ENCODE measurements at regions of chr21 and their contacts with region 1.

Region 1: DNA sequence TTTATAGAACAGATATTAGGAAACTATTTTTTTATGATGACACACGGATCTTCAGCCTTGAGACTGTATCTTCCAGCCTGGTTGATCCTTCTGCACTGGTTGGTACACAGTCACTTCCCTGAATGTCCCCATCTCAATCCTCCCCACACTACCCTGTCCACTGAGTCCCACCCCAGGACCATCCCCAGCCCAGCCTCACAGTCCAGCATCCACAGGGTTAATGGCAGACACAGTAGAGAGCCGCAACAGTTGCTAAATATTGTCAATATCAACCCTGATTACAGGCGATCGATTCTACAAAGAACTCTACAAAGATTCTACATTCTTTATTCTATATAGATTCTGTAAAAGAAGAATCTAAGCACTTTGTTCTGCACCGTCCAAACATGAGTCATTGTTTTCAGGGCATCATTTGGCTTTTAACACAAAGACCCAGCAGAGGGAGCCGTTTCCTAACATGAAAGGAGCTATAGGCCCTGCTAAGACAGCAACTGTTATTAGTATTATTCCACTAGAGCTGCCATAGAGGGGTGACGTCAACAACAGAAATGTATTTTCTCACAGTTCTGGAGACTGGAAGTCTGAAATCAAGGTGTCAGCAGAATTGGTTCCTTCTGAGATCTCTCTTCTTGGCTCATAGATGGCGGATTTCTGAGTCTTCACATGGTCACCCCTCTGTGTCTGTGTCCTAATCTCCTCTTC is 30.1 kb upstream of the IFNAR2 start:
- DNase-seq: peak; percentile 86 to 96 (median 89)
- H3K4me3 ChIP-seq: no peak overlapping the region
- H3K27ac ChIP-seq: peak overlapping the region in 4 of 5 donors; percentile 20 to 75 (median 62)
- H3K4me1 ChIP-seq: peaks cover 12 to 24% of the 10 kb centered on the region in 2 donors
- H3K27me3 ChIP-seq: no peaks in the 10 kb centered on the region
- CTCF ChIP-seq: peak; percentile 59 to 95 (median 86)
- POLR2A ChIP-seq: no peak

Region 2: DNA sequence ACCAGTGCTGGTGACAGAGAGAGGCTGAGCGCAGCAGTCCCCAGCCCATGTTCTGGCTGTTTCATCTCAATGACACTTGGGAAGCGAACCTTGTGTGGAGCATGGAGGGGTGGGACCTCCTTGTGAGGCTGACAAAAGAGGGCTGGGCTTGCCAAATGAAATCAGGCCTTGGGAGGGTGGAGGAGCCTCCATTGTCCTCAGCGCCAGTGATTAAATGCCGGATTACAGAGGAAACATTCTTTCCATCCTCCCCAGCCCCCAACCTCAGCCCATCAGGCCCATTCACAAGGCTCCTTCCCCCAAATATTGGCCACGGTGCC is 364.8 kb before region 1 on chr21:
- intact Hi-C with region 1: loop called in 1 of 2 experiments (anchors 10 kb)
- DNase-seq: no peak
- H3K4me3 ChIP-seq: no peak overlapping the region
- H3K27ac ChIP-seq: no peak overlapping the region
- H3K4me1 ChIP-seq: no peaks in the 10 kb centered on the region
- H3K27me3 ChIP-seq: no peaks in the 10 kb centered on the region
- CTCF ChIP-seq: no peak
- POLR2A ChIP-seq: no peak

Region 3: DNA sequence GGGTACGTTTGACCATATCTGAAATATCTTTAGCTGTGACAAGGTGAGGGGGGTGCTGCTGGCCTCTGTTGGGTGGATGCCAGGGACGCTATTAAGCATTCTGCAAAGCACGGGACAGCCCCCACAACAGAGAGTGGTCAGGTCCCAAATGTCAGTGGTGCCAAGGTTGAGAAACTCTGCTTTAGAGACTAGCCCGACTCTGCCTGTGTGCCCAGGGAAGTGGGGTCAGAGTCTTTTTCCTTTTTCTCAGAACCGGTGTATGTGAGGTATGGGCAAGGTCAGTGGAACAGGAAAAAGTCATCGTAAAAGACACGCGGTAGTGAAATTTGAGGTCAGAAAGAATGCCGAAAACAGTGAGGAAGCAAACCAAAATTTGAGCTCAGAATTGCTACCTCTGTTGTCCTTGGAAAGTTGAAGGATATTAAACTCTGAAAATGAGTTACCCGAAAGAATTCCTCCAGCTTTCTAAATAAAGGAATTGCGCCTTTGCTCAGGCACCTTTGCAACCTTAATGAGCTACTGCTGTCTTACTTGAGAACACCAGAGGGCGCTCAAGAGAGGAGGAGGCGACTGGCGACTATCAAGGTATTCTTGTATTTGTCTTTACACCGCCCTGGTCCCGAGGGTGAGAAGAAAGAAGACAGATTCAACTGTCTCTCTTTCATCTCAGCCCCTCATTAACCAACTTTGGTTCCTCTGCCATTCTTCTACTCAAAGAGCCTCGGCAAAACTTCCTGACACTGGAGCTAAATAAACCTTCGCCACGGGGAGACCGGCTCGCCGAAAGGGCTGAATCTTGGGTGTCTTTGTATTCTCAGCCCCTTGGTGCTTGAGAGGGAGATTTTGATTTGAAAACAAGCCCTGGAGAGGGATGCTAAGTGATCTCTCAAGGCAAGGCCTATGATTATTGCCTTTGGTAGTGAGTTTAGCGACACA is 259.3 kb before region 1 on chr21:
- intact Hi-C with region 1: loop called in 1 of 2 experiments (anchors 5 kb)
- DNase-seq: peak; percentile 24 to 63 (median 42)
- H3K4me3 ChIP-seq: no peak overlapping the region
- H3K27ac ChIP-seq: no peak overlapping the region
- H3K4me1 ChIP-seq: no peaks in the 10 kb centered on the region
- H3K27me3 ChIP-seq: no peaks in the 10 kb centered on the region
- CTCF ChIP-seq: peak; percentile 49 to 85 (median 65)
- POLR2A ChIP-seq: no peak

Region 4: DNA sequence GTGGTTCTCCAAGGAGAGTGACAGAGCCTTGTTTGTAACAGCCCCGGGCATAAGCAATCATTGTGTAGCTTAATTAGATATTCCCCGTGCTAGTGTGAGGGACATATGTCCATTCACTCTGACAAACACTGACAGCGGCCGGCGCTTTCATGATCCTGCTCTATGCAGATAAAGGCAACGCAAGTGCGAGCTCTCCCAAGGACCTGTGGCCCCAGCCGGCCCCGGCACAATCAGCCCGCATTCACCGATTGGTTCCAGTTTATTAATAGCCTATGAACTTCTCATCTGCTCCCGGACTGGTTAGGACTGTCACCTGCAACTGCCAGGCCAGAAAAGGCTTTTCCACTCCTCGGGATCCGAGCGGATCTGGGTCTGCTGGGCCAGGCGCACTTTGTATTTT is 147.7 kb before region 1 on chr21:
- intact Hi-C with region 1: no loop called
- DNase-seq: no peak
- H3K4me3 ChIP-seq: no peak overlapping the region
- H3K27ac ChIP-seq: no peak overlapping the region
- H3K4me1 ChIP-seq: no peaks in the 10 kb centered on the region
- H3K27me3 ChIP-seq: peaks cover 4% of the 10 kb centered on the region
- CTCF ChIP-seq: no peak
- POLR2A ChIP-seq: no peak

Region 5: GRCh38 chr21:33132054-33132453 is 67.6 kb before region 1 on chr21:
- intact Hi-C with region 1: no loop called
- DNase-seq: no peak
- H3K4me3 ChIP-seq: no peak overlapping the region
- H3K27ac ChIP-seq: no peak overlapping the region
- H3K4me1 ChIP-seq: no peaks in the 10 kb centered on the region
- H3K27me3 ChIP-seq: peaks cover 17% of the 10 kb centered on the region
- CTCF ChIP-seq: no peak
- POLR2A ChIP-seq: no peak

Region 6: DNA sequence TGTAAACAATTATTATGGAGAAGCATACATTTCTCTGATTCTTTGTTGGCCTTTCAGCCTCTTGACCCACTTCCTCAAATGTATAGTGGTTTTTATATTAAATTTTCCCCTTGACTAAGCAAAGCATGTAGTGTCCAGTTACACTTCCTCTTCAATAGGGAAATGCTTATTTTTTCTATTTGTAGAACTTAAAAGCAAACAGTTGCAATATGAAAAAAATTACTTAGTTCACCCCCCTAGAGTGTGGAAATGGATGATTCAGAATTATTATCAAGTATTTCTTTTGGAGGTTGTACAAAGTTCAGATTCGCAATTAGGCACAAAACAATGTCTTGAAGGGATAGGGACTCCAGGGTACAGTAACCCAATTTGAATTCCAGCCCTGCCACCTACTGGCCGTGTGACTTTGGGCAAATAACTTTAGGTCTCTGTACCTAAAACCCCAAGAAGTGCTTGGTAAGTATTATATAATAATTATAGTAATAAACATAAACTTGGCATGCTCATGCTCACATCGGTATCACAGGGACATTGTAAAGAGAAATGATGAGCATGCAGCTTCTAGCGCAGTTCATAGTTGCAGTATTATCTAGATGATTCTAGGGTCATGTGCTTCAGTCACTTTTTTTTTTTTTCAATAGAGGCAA is 174.9 kb after region 1 on chr21:
- intact Hi-C with region 1: loop called (anchors 5 to 10 kb)
- DNase-seq: peak; percentile 57 to 79 (median 62)
- H3K4me3 ChIP-seq: no peak overlapping the region
- H3K27ac ChIP-seq: peak overlapping the region in 3 of 5 donors; percentile 38 to 88 (median 42)
- H3K4me1 ChIP-seq: peaks cover 0 to 6% of the 10 kb centered on the region in 2 donors
- H3K27me3 ChIP-seq: no peaks in the 10 kb centered on the region
- CTCF ChIP-seq: peak; percentile 49 to 66 (median 60)
- POLR2A ChIP-seq: no peak

Region 7: DNA sequence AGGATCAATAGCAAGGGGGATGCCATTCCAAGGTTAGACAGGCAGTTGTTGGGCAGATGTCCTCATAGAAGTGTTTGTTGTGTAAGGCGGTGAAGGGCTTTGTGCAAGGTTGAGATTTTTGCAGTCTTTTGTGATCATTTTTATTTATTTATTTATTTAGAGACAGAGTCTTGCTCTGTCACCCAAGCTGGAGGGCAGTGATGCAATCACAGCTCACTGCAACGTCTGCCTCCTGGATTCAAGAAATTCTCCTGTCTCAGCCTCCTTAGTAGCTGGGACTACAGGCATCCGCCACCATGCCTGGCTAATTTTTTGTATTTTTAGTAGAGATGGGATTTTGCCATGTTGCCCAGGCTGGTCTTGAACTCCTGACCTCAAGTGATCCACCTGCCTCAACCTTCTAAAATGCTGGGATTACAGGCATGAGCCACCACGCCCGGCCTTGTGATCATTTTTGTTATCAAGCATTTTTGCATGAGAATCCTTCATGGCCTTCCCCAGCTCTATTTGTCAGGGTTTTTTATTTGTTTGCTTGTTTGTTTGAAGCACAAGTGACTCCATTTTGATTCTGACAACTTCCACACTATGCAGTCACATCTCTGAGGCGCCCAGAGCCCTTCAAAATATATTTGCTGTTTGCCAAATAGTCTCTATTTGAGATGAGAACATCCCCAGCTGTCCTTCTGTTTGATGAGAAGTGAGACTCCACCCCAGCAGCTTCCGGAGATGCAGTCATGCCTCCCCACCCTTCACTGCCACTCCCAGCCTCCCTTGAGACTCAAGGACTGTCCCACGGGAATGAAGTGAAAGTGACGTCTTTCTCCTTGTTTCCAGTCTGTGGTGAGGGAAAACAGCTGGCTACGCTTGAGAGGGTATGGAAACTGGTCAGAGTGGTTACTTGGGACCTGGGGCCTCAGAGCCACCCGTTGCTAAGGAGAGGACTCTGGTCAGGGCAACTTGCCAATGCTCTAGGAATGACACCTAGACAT is 242.1 kb after region 1 on chr21:
- intact Hi-C with region 1: loop called in 1 of 2 experiments (anchors 2 kb)
- DNase-seq: peak; percentile 54 to 84 (median 76)
- H3K4me3 ChIP-seq: no peak overlapping the region
- H3K27ac ChIP-seq: peak overlapping the region in 3 of 5 donors; percentile 10 to 64 (median 53)
- H3K4me1 ChIP-seq: peaks cover 0 to 12% of the 10 kb centered on the region in 2 donors
- H3K27me3 ChIP-seq: no peaks in the 10 kb centered on the region
- CTCF ChIP-seq: no peak
- POLR2A ChIP-seq: no peak

Region 8: DNA sequence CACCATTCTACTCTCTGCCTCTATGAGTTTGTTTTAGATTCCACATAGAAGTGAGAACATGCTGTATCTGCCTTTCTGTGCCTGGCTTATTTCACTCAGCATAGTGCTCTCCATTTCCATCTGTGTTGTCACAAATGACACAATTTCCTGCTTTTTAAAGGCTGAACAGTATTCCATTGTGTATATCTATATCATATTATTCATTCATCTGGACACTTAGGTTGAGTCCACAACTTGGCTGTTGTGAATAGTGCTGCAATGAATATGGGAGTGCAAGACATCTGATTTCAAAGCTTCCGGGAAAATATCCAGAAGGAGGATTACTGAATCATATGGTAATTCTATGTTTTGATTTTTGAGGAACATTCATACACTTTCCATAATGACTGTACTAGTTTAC is 408.9 kb after region 1 on chr21:
- intact Hi-C with region 1: loop called in 1 of 2 experiments (anchors 10 kb)
- DNase-seq: no peak
- H3K4me3 ChIP-seq: no peak overlapping the region
- H3K27ac ChIP-seq: no peak overlapping the region
- H3K4me1 ChIP-seq: no peaks in the 10 kb centered on the region
- H3K27me3 ChIP-seq: no peaks in the 10 kb centered on the region
- CTCF ChIP-seq: no peak
- POLR2A ChIP-seq: no peak